GM12878 (cell line): ENCODE measurements at regions of chr3 and their contacts with region 1.

Region 1: GRCh38 chr3:68972358-68972979 is 40.1 kb upstream of the TAFA4 start:
- DNase-seq: no peak
- ATAC-seq: peak; percentile 98
- H3K4me3 ChIP-seq: no peak overlapping the region
- H3K27ac ChIP-seq: no peak overlapping the region
- H3K4me1 ChIP-seq: no peaks in the 10 kb centered on the region
- H3K27me3 ChIP-seq: peaks cover 0 to 2% of the 10 kb centered on the region in 2 experiments; a peak in 1 of 4 replicates
- CTCF ChIP-seq: peak; percentile 76 to 80 (median 79)
- EP300 ChIP-seq: no peak
- POLR2A ChIP-seq: no peak
- RAD21 ChIP-seq: peak; percentile 75

Region 2: GRCh38 chr3:67384760-67385397 is 1587.6 kb before region 1 on chr3:
- CTCF ChIA-PET with region 1: no interaction called
- POLR2A ChIA-PET with region 1: no interaction called
- RAD21 ChIA-PET with region 1: no interaction called
- SMC1A ChIA-PET with region 1: no interaction called
- in situ Hi-C with region 1: no loop called
- intact Hi-C with region 1: loop called (anchors 10 kb)
- DNase-seq: no peak
- ATAC-seq: peak; percentile 68
- H3K4me3 ChIP-seq: no peak overlapping the region
- H3K27ac ChIP-seq: no peak overlapping the region
- H3K4me1 ChIP-seq: peaks cover 6% of the 10 kb centered on the region; the same call in 1 of the 2 replicates
- H3K27me3 ChIP-seq: no peaks in the 10 kb centered on the region
- CTCF ChIP-seq: peak; percentile 39 to 61 (median 42)
- EP300 ChIP-seq: no peak
- POLR2A ChIP-seq: no peak
- RAD21 ChIP-seq: peak; percentile 63

Region 3: DNA sequence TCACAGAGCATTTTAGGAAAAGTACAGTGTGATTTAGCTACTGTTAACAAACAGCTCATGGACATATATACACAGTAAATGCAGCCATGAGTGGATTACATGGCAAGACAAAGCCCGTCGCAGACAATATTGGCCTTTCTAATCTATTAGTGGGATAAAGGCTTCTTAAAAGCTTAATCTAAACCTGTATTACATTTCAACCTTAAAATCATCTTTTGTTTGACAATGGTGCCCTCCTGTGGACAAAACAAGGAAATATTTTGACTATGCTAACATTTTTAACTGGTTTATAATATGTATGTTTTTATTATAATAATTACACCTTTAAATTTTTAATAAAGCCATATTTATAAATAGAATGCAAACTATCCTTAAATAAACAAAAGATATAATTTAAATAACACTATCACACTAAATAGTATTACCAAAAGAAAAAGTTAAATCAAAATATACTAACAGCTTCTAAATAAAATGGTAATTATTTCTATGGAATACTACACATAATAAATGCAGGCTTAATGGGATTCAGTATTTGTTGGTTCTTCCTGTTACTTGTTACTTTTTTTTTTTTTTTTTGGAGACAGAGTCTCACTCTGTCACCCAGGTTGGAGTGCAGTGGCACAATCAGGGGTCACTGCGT is 78.7 kb before region 1 on chr3:
- CTCF ChIA-PET with region 1: interaction called, 11 read pairs
- POLR2A ChIA-PET with region 1: no interaction called
- RAD21 ChIA-PET with region 1: interaction called, 3 read pairs
- SMC1A ChIA-PET with region 1: interaction called, 3 read pairs
- in situ Hi-C with region 1: no loop called
- intact Hi-C with region 1: loop called (anchors 1 kb)
- DNase-seq: no peak
- ATAC-seq: no peak
- H3K4me3 ChIP-seq: no peak overlapping the region
- H3K27ac ChIP-seq: no peak overlapping the region
- H3K4me1 ChIP-seq: no peaks in the 10 kb centered on the region
- H3K27me3 ChIP-seq: no peaks in the 10 kb centered on the region
- CTCF ChIP-seq: peak; percentile 13 to 53 (median 47); a peak in 3 of 6 replicates
- EP300 ChIP-seq: no peak
- POLR2A ChIP-seq: no peak
- RAD21 ChIP-seq: peak; percentile 54

Region 4: DNA sequence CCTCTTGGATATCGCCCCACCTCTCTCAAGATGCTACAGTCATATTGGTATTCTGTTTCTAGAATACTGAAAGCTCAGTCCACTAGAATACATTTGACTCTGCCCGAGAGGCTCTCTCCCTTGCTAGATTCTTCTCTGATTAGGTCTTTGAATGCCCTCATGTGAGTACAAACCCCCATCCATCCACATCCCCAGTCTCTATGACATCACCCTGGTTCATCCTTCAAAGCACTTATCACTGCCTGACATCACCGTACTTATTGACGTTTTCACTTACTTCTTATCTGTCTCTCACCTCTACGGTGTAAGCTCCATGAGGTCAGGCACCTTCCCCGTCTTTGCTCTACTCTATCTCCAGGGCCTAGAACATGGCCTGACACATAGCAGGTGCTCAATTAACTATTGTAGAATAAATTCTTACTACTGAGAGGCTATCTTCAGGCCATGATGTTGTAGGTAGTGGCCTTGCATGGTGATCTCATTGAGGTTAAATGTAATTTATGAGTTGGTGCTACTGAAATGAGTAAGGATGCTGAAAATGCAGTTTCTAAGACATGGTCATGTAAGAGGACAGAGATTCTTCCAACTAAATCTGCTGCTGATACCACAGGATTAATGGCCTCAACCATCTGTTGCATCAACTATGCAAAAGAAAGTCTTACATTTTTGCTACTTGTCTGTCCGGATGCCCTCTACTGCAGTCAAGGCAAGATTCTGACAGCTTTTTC is 14.2 kb after region 1 on chr3:
- CTCF ChIA-PET with region 1: interaction called, 10 read pairs
- POLR2A ChIA-PET with region 1: no interaction called
- RAD21 ChIA-PET with region 1: no interaction called
- SMC1A ChIA-PET with region 1: interaction called, 5 read pairs
- in situ Hi-C with region 1: no loop called
- intact Hi-C with region 1: no loop called
- DNase-seq: no peak
- ATAC-seq: no peak
- H3K4me3 ChIP-seq: no peak overlapping the region
- H3K27ac ChIP-seq: no peak overlapping the region
- H3K4me1 ChIP-seq: no peaks in the 10 kb centered on the region
- H3K27me3 ChIP-seq: no peaks in the 10 kb centered on the region
- CTCF ChIP-seq: no peak
- EP300 ChIP-seq: no peak
- POLR2A ChIP-seq: no peak
- RAD21 ChIP-seq: no peak